Activated CD4-positive, alpha-beta T cell treated with anti-CD3 and anti-CD28 coated beads for 36 hours (primary cell): ENCODE measurements at regions of chr2 and their contacts with region 1.

Region 1: DNA sequence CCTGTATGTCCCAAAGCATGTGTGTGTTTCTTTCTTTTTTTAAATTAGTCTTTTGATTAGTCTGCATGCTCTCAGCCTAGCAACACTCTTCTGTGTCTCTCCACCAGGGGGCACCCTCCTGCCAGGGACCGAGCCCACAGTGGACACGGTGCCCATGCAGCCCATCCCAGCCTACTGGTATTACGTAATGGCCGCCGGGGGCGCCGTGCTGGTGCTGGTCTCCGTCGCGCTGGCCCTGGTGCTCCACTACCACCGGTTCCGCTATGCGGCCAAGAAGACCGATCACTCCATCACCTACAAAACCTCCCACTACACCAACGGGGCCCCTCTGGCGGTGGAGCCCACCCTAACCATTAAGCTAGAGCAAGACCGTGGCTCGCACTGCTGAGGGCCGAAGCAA is 93.8 kb downstream of the NRP2 start:
- DNase-seq: peak; percentile 73
- ATAC-seq: peak; percentile 30
- H3K4me3 Mint-ChIP-seq: no peak overlapping the region
- H3K27ac Mint-ChIP-seq: no peak overlapping the region
- H3K4me1 Mint-ChIP-seq: peaks cover 7% of the 10 kb centered on the region
- H3K27me3 Mint-ChIP-seq: peaks cover 23% of the 10 kb centered on the region

Region 2: DNA sequence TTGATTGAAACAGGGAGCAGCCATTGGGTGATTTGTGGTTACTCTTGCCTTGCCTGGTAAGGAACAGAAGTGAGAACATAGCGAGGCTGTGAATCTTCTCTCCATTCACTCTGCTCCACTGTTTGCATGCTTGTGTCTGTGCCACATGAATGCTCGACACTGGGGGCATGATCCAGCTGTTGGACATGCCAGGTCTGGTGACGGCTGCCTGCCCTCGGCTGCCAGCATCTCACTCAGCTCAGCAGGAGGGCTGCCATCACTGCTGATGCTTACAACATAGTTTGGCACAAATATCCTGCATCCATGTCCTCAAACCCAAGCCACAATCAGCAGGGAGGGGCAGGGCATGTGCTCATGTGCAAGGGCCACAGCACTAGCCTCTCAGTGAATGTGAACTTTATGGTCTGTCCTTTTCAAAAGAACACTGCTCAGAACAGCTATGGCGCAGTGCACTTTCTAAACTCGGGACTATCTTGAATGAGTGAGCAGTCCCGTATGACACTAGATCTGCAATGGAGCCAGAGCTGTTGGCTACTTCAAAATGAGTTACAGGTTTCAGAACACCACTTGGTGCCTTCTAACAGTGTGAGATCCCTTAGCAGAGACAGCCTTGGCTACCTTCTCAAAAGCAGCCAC is 32.5 kb after region 1 on chr2:
- CTCF ChIA-PET with region 1: interaction called, 4 read pairs
- POLR2A ChIA-PET with region 1: no interaction called
- intact Hi-C with region 1: loop called in 1 of 2 experiments (anchors 2 kb)
- DNase-seq: no peak
- ATAC-seq: no peak
- H3K4me3 Mint-ChIP-seq: no peak overlapping the region
- H3K27ac Mint-ChIP-seq: no peak overlapping the region
- H3K4me1 Mint-ChIP-seq: no peaks in the 10 kb centered on the region
- H3K27me3 Mint-ChIP-seq: peaks cover 2% of the 10 kb centered on the region

Region 3: DNA sequence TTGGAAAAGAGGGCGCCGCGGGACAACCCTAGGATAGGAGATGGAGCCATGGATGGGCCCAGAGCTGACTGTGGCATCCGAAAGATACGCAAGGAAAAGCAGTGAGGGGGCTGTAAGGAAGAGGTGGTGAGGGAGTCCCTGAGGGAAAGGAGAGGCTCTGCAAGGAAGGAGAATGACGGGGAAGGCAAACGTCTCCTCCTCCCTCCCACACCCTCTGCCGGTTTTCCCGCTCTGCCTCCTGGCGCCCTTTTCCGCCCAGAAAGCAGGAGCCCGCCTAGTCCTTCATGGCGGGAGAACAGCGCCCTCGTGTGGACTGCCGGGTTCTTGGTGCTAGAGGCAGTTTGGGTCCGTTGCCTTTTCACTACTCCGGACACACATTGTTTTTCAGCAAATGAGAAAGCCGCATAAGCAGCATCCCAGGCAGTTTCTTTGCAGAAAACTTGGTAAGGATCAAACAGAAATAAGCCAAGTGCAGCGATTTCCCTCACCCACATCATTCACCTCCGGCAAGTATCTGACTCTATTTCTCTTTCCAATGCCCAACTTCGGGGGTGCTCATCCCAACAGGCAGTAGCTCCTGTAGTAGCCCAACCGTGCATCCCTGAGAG is 109.5 kb after region 1 on chr2:
- CTCF ChIA-PET with region 1: interaction called, 6 read pairs
- POLR2A ChIA-PET with region 1: no interaction called
- intact Hi-C with region 1: loop called in 1 of 2 experiments (anchors 1 kb)
- DNase-seq: peak; percentile 86
- ATAC-seq: peak; percentile 69
- H3K4me3 Mint-ChIP-seq: no peak overlapping the region
- H3K27ac Mint-ChIP-seq: no peak overlapping the region
- H3K4me1 Mint-ChIP-seq: no peaks in the 10 kb centered on the region
- H3K27me3 Mint-ChIP-seq: peaks cover 16% of the 10 kb centered on the region

Region 4: DNA sequence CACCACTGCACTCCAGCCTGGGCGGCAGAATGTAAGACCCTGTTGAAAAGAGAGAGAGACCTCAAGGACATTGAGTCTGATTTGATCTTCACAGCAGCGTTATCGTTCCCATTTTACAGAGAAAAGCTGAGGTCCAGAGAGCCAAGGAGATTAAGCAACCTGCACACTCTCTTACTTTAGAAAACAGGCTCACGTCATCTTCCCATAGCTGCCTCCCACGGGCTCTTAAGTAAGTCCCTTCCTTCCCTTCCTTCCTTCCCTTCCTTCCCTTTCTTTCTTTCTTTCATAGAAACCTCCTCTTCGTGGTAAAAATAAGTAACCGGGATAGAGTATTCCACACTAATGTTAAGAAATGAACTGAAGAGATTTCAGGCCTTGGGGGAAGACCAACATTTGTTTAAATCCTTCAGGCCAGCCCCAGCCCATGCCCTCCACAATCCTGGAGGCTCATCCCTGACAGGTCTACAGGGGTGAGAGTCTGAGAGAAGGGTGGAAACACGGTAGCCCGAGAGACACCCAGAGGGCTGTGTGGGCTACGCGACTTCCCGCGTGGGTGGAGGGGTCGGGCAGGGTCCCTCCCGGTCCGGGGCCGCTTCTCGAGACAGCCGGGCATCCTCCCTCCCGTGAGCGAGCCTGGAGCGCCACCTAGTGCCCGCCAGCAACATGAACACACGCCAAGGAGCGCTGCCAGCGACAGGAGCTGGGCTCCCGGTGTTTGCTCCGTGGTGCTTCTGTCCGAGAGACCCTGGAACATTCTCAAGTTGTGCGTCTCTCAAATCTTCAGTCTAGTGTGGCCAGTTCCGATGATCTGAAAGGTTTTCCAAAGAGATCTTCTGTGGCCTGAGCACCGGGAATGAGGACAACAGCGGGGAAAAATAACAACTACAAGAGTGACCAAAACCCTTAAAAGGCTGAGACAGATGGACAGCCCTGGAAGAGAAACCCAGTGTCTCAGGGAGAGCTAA is 149.5 kb after region 1 on chr2:
- CTCF ChIA-PET with region 1: interaction called, 7 read pairs
- POLR2A ChIA-PET with region 1: no interaction called
- intact Hi-C with region 1: loop called in 1 of 2 experiments (anchors 1 kb)
- DNase-seq: peak; percentile 88
- ATAC-seq: peak; percentile 98
- H3K4me3 Mint-ChIP-seq: no peak overlapping the region
- H3K27ac Mint-ChIP-seq: no peak overlapping the region
- H3K4me1 Mint-ChIP-seq: peaks cover 7% of the 10 kb centered on the region
- H3K27me3 Mint-ChIP-seq: peaks cover 45% of the 10 kb centered on the region